Spleen (tissue), 13 donors: ENCODE measurements at regions of chr5 and their contacts with region 1.

Region 1: DNA sequence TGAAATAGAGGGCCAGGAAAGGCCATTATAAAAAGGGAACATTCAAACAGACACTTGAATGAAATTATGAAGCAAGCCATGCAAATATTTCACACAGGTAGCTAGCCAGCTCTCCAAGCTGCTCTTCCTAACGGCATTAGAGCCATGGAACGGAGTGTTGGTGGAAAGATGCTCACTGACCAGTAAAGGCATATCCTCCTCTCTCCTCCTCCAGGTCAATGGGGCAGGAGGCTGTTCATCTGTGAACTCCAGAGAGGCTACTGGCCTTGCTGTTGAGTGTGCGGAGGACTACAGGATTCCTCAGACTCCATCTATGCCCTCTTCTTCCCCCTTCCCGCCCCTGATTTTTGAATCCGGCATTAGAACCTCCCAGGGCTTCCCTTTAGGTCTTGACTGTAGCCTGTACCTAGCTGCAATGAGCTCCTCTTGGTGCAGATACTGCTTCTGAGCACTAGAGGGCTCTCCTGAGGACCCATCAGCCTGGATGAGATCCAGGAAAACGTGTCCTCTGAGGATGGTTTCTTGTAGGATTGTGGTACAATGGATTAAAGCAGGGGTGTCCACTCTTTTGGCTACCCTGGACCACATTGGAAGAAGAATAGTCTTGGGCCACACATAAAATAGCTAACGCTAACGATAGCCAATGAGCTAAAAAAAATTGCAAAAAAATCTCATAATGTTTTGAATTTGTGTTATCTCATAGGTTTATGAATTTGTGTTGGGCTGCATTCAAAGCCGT is 162.2 kb downstream of the SREK1 start:
- DNase-seq: no peak
- H3K4me3 ChIP-seq: no peak overlapping the region
- H3K27ac ChIP-seq: no peak overlapping the region
- H3K4me1 ChIP-seq: peaks cover 0 to 19% (median 12%) of the 10 kb centered on the region in 6 donors
- H3K27me3 ChIP-seq: peaks cover 0 to 20% (median 0%) of the 10 kb centered on the region in 7 donors
- CTCF ChIP-seq: peak in 10 of 11 experiments; percentile 29 to 87 (median 68)
- POLR2A ChIP-seq: no peak

Region 2: GRCh38 chr5:66680739-66681138 is 374.5 kb after region 1 on chr5:
- intact Hi-C with region 1: no loop called
- DNase-seq: no peak
- H3K4me3 ChIP-seq: no peak overlapping the region
- H3K27ac ChIP-seq: no peak overlapping the region
- H3K4me1 ChIP-seq: no peaks in the 10 kb centered on the region
- H3K27me3 ChIP-seq: no peaks in the 10 kb centered on the region
- CTCF ChIP-seq: peak in 2 of 11 experiments; percentile 13 to 25
- POLR2A ChIP-seq: no peak

Region 3: GRCh38 chr5:66757188-66757833 is 451.0 kb after region 1 on chr5:
- intact Hi-C with region 1: loop called (anchors 5 kb)
- DNase-seq: no peak
- H3K4me3 ChIP-seq: no peak overlapping the region
- H3K27ac ChIP-seq: no peak overlapping the region
- H3K4me1 ChIP-seq: no peaks in the 10 kb centered on the region
- H3K27me3 ChIP-seq: peaks cover 0 to 21% (median 0%) of the 10 kb centered on the region in 7 donors
- CTCF ChIP-seq: peak in 9 of 11 experiments; percentile 15 to 50 (median 35)
- POLR2A ChIP-seq: no peak